A673 (cell line): ENCODE measurements at regions of chr19 and their contacts with region 1.

Region 1: DNA sequence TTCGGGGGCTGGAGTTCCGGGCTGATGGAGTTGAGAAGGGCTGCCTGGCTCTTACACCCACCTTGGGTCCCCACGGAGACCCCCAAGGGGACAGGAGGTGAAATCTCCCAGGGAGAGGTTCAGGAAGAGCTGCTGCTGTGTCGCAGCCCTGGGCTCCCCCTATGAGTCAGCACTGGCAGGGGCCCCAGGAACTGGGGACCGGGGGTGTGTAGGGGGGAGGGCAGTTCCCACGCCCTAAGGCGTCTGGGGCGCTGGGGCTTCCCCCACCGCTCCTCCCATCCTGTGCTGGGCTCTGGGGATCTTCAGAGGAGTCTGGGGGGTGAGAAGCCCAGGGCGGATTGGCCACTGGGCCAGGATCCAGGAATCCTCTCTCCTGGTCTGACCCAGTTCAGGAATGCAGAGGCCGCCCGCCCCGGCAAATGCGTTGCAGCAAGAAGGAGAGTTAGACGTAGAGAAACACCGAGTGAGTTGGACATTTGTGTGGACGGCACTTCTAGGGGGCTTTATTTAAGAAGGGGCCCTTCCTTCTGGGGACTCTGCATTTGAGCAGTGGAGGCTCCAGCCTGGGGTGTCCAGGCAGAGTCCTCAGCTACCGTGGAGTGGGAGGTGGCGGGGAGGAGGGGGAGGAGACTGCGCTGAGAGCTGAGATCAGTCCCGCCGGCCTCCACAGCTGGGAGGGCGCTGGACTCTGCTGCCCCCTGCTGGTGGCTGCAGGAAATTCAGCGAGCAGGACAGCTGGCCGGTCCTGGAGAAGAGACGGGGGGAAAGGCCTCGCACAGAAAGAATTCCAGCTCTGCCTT is 15.0 kb upstream of the NANOS3 start:
- DNase-seq: peak; percentile 94
- H3K4me3 ChIP-seq: peak overlapping the region; percentile 45
- H3K27ac ChIP-seq: peak overlapping the region; percentile 92
- H3K4me1 ChIP-seq: peaks cover 18% of the 10 kb centered on the region
- H3K27me3 ChIP-seq: no peaks in the 10 kb centered on the region
- CTCF ChIP-seq: peak; percentile 93

Region 2: DNA sequence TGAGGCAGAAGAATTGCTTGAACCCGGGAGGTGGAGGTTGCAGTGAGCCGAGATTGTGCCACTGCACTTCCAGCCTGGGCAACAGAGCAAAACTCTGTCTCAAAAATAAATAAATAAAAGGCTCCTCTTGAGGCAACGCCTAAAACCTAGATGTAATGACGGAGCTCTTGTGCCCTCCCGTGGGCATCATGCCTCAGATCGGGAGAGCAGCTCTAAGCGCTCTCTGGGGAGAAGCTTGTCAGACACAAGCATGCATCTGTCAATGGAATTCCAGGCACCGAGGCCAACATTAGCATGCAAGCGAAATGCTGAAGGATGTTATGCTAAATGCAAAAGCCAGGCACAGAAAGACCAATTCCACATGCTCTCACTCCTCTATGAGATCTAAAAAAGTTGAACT is 143.2 kb before region 1 on chr19:
- CTCF ChIA-PET with region 1: interaction called, 10 read pairs
- POLR2A ChIA-PET with region 1: no interaction called
- intact Hi-C with region 1: no loop called
- DNase-seq: peak; percentile 91
- H3K4me3 ChIP-seq: no peak overlapping the region
- H3K27ac ChIP-seq: no peak overlapping the region
- H3K4me1 ChIP-seq: no peaks in the 10 kb centered on the region
- H3K27me3 ChIP-seq: no peaks in the 10 kb centered on the region
- CTCF ChIP-seq: peak; percentile 67

Region 3: DNA sequence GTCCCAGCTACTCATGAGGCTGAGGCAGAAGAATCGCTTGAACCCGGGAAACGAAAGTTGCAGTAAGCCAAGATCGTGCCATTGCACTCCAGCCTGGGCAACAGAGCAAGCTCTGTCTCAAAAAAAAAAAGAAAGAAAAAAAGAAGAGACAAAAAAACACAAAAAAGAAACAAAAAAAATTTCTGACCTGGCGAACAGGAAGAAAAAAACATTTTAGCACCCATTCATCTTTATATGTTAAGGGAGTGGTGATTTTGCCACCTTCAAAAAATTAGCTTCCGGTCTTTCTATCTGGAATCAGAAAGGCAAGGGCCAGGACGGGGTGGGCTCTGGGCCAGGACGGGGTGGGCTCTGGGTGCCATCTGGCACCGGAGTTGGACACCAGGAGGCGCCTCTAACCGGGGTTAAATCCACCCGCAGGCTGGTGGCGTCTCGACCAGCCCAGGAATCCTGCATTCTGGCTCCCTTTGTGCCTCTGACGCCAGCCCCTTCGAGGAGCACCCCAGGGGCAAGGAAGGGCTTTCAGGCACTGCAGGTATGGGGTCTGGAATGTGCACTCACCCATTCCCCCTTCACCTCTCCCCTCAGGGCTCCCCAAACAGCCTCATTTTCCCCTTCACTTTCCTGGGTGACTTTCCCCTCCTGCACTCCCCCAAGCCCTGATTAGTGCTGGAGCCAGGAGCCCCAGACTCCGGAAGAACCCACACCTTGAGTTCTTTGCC is 77.0 kb before region 1 on chr19:
- CTCF ChIA-PET with region 1: interaction called, 12 read pairs
- POLR2A ChIA-PET with region 1: interaction called, 4 read pairs
- intact Hi-C with region 1: loop called (anchors 1 kb)
- DNase-seq: peak; percentile 82
- H3K4me3 ChIP-seq: no peak overlapping the region
- H3K27ac ChIP-seq: no peak overlapping the region
- H3K4me1 ChIP-seq: peaks cover 16% of the 10 kb centered on the region
- H3K27me3 ChIP-seq: no peaks in the 10 kb centered on the region
- CTCF ChIP-seq: peak; percentile 78

Region 4: DNA sequence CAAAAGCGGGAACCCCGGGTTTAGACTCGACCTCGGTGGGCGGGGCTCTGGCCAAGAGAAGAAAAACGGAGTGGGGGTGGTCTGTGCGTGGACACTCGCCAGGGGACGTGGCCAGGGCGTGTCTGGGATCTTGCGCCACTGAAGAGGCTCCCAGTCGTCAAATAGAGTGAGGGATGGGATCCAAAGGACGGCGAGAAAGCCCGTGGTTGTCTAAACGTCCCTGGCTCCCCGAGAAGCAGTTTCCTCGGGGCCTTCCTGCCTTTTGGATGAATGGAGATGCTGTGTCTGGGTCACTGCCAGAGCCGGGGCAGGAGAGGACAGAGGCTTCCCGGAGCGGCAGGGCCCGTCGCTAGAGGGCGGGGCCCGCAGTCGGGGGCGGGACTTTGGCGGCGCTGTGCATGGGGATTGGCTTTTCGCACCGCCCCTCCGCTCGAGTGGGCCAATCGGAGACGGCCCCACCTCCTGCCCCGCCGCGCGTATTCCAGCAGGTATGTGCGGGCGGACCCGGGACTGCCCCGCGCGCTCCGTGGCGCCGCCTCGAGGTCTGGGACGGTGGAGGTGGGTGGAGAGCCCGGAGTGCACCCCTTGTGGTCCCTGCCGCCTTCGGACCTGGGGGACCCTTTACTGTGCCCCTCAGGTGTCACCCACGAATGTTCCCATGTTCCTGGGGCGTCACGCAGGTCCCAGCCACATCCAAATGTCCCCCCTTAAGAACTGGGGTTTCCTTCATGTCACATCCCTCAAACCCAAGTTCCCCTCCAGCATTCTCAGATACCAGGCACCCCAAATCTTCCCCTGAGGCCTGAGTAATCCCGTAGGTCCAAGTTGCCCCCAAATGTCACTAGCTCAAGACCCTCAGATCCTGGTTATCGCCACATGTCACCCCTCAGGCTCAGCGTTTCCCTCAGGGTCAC is 28.3 kb before region 1 on chr19:
- CTCF ChIA-PET with region 1: interaction called, 8 read pairs
- POLR2A ChIA-PET with region 1: interaction called, 13 read pairs
- intact Hi-C with region 1: no loop called
- DNase-seq: peak; percentile 90
- H3K4me3 ChIP-seq: peak overlapping the region; percentile 32
- H3K27ac ChIP-seq: no peak overlapping the region
- H3K4me1 ChIP-seq: peaks cover 31% of the 10 kb centered on the region
- H3K27me3 ChIP-seq: no peaks in the 10 kb centered on the region
- CTCF ChIP-seq: peak; percentile 47; the same call in 1 of the 2 replicates

Region 5: GRCh38 chr19:13872695-13873389 is 10.9 kb after region 1 on chr19:
- CTCF ChIA-PET with region 1: interaction called, 16 read pairs
- POLR2A ChIA-PET with region 1: no interaction called
- intact Hi-C with region 1: no loop called
- DNase-seq: peak; percentile 62
- H3K4me3 ChIP-seq: peak overlapping the region; percentile 30
- H3K27ac ChIP-seq: peak overlapping the region; percentile 23
- H3K4me1 ChIP-seq: peaks cover 13% of the 10 kb centered on the region
- H3K27me3 ChIP-seq: no peaks in the 10 kb centered on the region
- CTCF ChIP-seq: peak; percentile 33; the same call in 1 of the 2 replicates

Region 6: DNA sequence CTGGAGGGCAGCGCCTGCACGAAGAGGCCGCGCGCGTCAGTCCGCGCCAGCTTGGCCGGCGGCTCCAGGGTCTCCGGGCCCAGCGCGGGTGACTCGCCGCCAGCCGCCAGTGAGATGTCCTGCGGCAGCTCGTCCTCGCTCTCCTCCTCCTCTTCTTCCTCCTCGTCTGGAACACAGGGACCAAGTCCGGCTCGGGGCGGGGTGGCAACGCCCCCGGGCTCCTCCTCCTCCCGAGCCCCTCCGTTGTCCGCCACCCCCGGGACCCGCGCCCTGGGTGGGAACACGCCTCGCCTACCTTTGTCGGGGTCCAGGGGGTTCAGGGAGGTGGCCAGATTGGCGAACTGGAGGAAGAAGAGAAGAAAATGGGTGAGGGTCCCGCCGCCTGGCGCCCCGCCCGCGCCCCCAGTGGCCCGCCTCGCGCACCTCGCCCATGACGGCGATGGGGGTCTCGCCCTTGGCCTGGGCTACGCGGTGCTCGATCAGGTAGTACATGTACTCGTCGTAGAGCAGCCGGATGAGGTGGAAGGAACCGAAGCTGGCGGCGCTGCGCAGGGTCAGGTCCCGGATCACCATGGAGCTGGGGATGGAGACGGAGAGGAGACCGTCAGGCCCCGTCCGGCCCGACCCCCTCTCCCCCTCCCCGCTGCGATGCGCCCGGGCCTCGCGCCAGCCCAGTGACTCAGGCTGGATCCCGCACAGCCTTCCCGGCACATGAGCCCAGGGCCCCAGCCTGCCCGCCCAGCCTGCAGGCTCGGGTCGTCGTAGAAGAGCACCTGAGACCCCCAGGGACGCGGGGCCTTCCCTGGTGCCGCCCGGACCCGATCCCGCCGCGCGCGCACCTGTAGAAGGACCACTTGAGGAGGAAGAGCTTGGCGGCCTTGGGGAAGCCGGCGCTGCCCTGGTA is 101.0 kb after region 1 on chr19:
- CTCF ChIA-PET with region 1: no interaction called
- POLR2A ChIA-PET with region 1: no interaction called
- intact Hi-C with region 1: no loop called
- DNase-seq: no peak
- H3K4me3 ChIP-seq: no peak overlapping the region
- H3K27ac ChIP-seq: no peak overlapping the region
- H3K4me1 ChIP-seq: no peaks in the 10 kb centered on the region
- H3K27me3 ChIP-seq: no peaks in the 10 kb centered on the region
- CTCF ChIP-seq: no peak